ENCODE measurements at regions of chr1 and their contacts with region 1.

Region 1: DNA sequence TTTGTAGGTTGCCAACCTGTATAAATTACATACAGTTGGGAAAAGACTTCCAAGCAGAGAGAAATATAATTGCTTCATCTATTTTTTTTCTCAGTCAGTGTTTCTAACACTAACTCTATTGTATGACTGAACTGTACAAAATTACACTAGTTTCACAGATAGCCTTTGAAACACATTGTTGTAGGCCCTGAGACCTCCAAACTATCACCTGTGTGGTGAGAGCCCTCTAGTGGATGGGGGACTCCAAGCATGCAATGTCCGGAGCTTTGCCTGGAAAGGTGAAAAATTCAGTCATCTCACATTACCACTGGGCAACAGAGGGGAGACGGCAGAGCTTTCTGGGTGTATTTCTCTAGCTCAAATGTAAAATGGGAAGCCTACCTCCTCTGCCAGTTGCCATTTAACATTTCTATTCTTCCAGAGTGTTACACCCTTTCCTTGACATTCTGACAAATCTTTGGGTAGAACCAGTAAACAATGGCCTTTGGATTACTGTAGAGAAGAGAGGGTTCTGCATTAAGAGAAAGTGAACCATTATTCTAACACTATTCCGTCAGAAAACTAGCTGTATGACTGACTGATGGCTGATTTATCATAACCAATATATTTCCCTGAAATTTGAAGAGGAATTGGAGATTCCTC is 212.2 kb downstream of the LYPLAL1 start:
- DNase-seq: peak; percentile 87
- H3K4me3 Mint-ChIP-seq: no peak overlapping the region
- H3K27ac Mint-ChIP-seq: no peak overlapping the region
- H3K4me1 Mint-ChIP-seq: no peaks in the 10 kb centered on the region
- H3K27me3 Mint-ChIP-seq: peaks cover 63% of the 10 kb centered on the region
- CTCF ChIP-seq: peak; percentile 96

Region 2: DNA sequence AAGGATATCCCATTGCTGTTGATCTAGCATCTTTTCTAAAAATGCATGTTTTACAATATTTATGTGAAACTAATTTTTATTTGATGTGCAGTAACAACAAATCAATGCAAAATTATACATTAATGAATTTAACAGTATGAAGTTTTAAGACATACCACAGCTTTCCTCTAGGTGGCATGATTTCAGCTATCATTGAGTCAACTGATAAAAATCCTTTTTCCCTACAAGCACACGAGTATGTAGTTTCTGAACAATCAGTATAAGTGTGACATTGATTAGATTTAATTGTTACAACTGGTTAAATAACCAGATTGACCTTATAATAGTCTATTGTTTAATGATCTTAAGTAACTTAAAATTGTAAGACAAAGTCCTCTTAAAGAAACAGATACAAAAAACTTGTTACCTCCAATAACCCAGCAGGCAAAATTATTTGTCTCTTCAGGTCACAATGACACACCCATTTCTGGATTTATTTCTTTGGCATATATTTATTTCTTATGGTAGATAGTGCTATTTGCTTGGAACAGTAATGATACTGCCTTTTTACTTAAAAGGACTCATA is 1046.6 kb before region 1 on chr1:
- CTCF ChIA-PET with region 1: interaction called, 13 read pairs
- POLR2A ChIA-PET with region 1: no interaction called
- intact Hi-C with region 1: no loop called
- DNase-seq: peak; percentile 71
- H3K4me3 Mint-ChIP-seq: no peak overlapping the region
- H3K27ac Mint-ChIP-seq: no peak overlapping the region
- H3K4me1 Mint-ChIP-seq: no peaks in the 10 kb centered on the region
- H3K27me3 Mint-ChIP-seq: no peaks in the 10 kb centered on the region
- CTCF ChIP-seq: peak; percentile 90

Region 3: DNA sequence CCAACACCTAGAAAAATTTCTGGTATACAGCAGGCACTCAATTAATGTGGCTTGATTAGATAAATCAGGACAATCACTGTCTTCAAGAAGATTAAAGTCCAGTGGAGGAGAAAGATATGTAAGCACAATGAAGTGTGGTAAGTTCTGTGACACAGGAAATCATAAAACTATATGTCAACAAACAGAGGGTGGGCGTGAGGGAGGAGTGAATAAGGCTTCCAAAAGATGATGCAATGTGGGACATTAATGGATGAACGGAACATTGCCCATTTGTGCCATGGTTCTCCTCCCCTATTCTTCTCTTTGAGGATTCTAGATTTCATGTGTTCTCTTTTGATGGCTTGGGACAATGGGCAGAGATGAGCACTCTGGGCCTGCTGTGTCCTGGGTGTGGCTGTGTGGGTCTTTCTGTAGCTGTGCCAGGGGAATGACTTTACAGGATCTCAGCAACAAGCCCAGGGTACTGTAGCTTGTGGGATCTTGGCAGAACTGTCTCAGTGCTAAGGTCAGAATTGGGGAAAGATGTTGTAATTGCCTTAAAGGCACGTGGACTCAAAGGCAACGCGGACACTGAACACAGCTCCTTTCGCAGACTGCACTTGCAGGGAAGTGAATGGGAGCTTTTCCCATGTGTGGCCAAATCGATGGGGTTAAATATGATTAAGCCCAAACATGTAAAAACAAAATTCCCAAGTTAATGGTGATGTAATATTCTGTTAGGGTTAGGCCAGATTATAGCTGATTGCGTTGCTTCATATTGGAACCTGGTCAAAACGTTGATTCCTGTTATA is 673.8 kb before region 1 on chr1:
- CTCF ChIA-PET with region 1: interaction called, 3 read pairs
- POLR2A ChIA-PET with region 1: no interaction called
- intact Hi-C with region 1: loop called (anchors 10 kb)
- DNase-seq: peak; percentile 99
- H3K4me3 Mint-ChIP-seq: no peak overlapping the region
- H3K27ac Mint-ChIP-seq: peak overlapping the region; percentile 33
- H3K4me1 Mint-ChIP-seq: peaks cover 53% of the 10 kb centered on the region
- H3K27me3 Mint-ChIP-seq: no peaks in the 10 kb centered on the region
- CTCF ChIP-seq: no peak

Region 4: DNA sequence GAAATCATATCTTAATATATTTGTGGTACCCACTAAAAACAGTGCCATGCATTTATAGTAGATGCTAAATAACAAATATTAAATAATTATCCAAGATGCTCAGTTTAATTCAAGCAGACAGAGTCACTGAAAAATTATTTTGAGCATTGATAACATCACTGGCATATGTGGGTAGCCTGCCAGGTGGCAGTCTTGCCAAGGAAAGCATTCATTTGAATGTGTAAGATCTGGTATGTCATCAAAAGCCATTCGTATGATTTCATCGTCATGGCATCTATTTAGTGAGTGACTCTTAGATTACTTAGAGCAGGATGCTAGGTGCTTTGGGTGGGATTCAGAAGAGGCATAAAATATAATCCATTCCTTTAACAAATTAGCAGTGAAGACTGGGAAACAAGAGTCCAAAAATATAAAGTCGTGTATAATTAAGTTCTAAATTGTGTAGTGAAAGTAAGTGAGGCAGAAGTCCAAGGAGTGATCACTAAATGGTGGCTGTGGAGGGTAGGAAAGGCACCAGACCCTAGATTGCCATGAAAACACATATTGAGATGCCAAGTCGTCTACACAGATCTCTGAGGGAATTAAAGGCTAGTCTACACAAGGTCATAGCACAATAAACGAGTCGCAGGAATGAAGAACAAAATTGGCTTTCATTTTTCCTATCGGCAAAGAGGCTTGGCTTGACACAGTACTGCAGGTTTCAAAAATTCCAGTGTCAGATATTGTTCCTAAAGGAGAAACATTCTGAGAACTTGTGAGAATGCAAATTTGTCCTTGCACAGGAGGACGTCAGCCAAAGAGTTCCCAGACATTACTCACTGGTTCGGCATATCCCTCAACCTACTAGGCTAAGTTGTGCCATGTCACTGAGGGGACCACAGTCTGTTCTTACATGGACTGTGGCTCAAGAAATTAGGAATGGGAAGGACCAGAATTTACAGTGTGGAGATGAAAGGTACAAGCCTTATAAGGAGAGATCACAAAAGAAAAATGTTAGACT is 81.4 kb before region 1 on chr1:
- CTCF ChIA-PET with region 1: interaction called, 21 read pairs
- POLR2A ChIA-PET with region 1: no interaction called
- intact Hi-C with region 1: loop called (anchors 1 kb)
- DNase-seq: peak; percentile 79
- H3K4me3 Mint-ChIP-seq: no peak overlapping the region
- H3K27ac Mint-ChIP-seq: no peak overlapping the region
- H3K4me1 Mint-ChIP-seq: peaks cover 11% of the 10 kb centered on the region
- H3K27me3 Mint-ChIP-seq: peaks cover 84% of the 10 kb centered on the region
- CTCF ChIP-seq: peak; percentile 49

Region 5: DNA sequence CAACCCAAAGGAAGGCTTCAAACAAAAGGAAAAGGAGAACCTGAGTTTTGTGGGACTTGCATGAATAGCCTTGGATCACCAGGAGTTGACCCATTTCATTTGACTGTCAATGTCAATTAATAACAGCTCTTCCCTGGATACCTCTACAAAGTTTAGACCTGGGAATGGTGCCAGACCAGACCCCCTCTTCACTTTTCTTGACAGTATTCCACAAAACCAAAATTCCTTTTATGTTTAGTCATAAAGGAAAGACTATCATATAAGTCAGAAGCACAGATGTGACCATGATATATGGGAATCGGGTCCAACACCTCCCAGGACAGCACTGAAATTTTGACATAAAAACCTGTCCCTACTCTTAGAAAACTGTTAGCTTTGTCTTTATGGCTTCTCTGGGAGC is 20.5 kb before region 1 on chr1:
- CTCF ChIA-PET with region 1: interaction called, 36 read pairs
- POLR2A ChIA-PET with region 1: interaction called, 3 read pairs
- intact Hi-C with region 1: no loop called
- DNase-seq: no peak
- H3K4me3 Mint-ChIP-seq: no peak overlapping the region
- H3K27ac Mint-ChIP-seq: no peak overlapping the region
- H3K4me1 Mint-ChIP-seq: no peaks in the 10 kb centered on the region
- H3K27me3 Mint-ChIP-seq: peaks cover 96% of the 10 kb centered on the region
- CTCF ChIP-seq: no peak

Region 6: DNA sequence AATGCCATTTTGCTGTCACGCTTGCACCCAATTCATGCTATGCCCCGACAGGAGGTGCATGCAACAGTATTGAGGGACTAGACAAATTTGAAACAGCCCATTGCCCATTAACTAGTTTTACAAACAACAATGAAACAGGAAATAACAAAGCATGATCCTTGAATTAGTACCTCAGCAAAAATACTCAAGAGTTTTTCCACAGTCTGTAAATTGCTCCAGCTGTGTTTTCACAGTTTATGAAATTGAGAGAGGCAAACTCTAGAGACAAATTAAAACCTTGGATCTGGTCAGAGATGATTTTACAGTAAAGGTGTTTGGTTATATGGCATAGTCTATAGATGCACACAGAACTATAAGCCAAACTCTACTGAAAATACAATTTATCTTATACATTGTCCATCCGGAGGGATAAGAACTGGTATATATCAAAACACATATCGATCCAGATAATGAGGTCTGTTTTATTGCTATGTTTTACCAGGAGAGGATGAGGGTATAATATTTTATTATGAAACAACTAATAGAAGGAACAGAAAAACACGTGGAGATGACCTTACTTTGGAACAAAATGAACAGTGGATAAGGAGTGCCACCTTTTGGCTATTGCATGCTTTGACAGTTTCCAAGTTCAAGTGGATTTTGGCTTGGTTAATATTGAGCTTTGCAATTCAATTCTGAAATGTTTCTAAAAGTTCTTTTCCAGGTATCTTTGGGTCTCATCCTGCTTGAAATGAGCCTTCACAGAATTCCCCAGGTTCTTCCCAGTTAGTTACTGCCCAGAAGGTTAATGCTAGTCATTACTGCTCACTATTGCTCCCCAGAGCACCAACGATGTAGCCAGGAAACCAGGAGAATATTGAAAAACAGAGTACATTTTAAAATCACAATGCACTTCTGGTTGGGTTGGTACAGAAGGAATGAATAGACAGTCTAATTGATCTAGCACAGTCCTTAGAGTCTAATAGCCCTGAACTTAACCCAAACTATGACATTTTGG is 181.3 kb after region 1 on chr1:
- CTCF ChIA-PET with region 1: interaction called, 27 read pairs
- POLR2A ChIA-PET with region 1: no interaction called
- intact Hi-C with region 1: loop called (anchors 2 kb)
- DNase-seq: peak; percentile 78
- H3K4me3 Mint-ChIP-seq: no peak overlapping the region
- H3K27ac Mint-ChIP-seq: no peak overlapping the region
- H3K4me1 Mint-ChIP-seq: no peaks in the 10 kb centered on the region
- H3K27me3 Mint-ChIP-seq: peaks cover 91% of the 10 kb centered on the region
- CTCF ChIP-seq: peak; percentile 85

Region 7: GRCh38 chr1:219713981-219714381 is 328.1 kb after region 1 on chr1:
- CTCF ChIA-PET with region 1: no interaction called
- POLR2A ChIA-PET with region 1: no interaction called
- intact Hi-C with region 1: no loop called
- DNase-seq: no peak
- H3K4me3 Mint-ChIP-seq: no peak overlapping the region
- H3K27ac Mint-ChIP-seq: no peak overlapping the region
- H3K4me1 Mint-ChIP-seq: no peaks in the 10 kb centered on the region
- H3K27me3 Mint-ChIP-seq: peaks cover 32% of the 10 kb centered on the region
- CTCF ChIP-seq: no peak